ENCODE measurements at regions of chr3 and their contacts with region 1.

Region 1: GRCh38 chr3:184380191-184380626 is 355 bp downstream of the CHRD start:
- DNase-seq: peak; percentile 69 to 80
- ATAC-seq: peak in 6 of 8 donors; percentile 41 to 62 (median 48)
- H3K4me3 ChIP-seq: peak overlapping the region; percentile 11 to 58 (median 54)
- H3K27ac ChIP-seq: peak overlapping the region in 6 of 10 donors; percentile 41 to 79 (median 68)
- H3K4me1 ChIP-seq: peaks cover 7 to 40% (median 21%) of the 10 kb centered on the region in 9 donors
- H3K27me3 ChIP-seq: peaks cover 5 to 78% (median 62%) of the 10 kb centered on the region in 7 donors
- CTCF ChIP-seq: no peak

Region 2: DNA sequence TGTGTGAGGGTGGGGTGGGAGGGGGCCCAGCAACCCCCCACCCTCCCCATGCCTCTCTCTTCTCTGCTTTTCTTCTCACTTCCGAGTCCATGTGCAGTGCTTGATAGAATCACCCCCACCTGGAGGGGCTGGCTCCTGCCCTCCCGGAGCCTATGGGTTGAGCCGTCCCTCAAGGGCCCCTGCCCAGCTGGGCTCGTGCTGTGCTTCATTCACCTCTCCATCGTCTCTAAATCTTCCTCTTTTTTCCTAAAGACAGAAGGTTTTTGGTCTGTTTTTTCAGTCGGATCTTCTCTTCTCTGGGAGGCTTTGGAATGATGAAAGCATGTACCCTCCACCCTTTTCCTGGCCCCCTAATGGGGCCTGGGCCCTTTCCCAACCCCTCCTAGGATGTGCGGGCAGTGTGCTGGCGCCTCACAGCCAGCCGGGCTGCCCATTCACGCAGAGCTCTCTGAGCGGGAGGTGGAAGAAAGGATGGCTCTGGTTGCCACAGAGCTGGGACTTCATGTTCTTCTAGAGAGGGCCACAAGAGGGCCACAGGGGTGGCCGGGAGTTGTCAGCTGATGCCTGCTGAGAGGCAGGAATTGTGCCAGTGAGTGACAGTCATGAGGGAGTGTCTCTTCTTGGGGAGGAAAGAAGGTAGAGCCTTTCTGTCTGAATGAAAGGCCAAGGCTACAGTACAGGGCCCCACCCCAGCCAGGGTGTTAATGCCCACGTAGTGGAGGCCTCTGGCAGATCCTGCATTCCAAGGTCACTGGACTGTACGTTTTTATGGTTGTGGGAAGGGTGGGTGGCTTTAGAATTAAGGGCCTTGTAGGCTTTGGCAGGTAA is 34.7 kb before region 1 on chr3:
- intact Hi-C with region 1: no loop called
- DNase-seq: peak; percentile 46 to 67
- ATAC-seq: peak; percentile 50 to 87 (median 74)
- H3K4me3 ChIP-seq: no peak overlapping the region
- H3K27ac ChIP-seq: peak overlapping the region in 4 of 10 donors; percentile 22 to 46 (median 40)
- H3K4me1 ChIP-seq: peaks cover 0 to 23% (median 8%) of the 10 kb centered on the region in 9 donors
- H3K27me3 ChIP-seq: no peaks in the 10 kb centered on the region
- CTCF ChIP-seq: peak in 7 of 9 donors; percentile 33 to 59 (median 55)

Region 3: GRCh38 chr3:184523825-184524615 is 143.8 kb after region 1 on chr3:
- intact Hi-C with region 1: loop called in 2 of 10 experiments (anchors 5 to 10 kb)
- DNase-seq: no peak
- ATAC-seq: peak in 5 of 8 donors; percentile 58 to 87 (median 76)
- H3K4me3 ChIP-seq: no peak overlapping the region
- H3K27ac ChIP-seq: no peak overlapping the region
- H3K4me1 ChIP-seq: peaks cover 0 to 24% (median 20%) of the 10 kb centered on the region in 9 donors
- H3K27me3 ChIP-seq: peaks cover 0 to 77% (median 48%) of the 10 kb centered on the region in 7 donors
- CTCF ChIP-seq: no peak

Region 4: DNA sequence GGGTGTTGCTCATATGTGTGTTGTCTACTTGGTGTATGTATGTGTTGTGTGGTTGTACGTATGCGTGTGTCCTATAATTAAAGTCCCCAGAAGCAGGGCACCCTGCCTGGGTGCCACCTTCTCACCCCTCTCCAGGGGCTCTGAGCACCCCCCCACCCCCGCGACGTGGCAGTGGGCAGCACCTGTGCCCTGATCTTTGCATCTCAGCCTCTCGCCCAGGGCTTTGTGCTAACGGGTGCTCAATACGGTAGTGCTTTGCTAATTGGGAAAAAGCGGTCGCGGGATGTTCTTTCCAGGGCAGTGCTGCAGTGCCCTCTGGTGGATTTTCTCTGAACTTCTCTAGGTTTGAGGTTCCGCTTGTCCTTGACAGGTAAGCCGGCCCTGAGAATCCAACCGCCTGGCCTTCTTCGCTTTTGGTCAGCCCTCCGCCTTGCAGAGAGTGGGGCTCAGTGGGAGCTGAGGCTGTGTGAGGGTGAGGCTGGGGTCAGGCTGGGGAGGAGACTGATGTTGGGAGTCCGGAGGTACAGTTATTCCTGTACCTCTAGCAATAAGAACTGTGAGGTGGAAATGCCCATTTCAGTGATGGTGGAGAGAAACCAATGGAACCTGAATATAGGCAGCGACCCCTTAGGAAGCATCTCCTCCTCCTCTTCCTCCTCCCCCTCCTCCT is 163.8 kb after region 1 on chr3:
- intact Hi-C with region 1: loop called in 1 of 10 experiments (anchors 5 kb)
- DNase-seq: peak in 1 of 2 donors; percentile 81
- ATAC-seq: peak; percentile 61 to 77 (median 72)
- H3K4me3 ChIP-seq: no peak overlapping the region
- H3K27ac ChIP-seq: no peak overlapping the region
- H3K4me1 ChIP-seq: peaks cover 0 to 12% (median 3%) of the 10 kb centered on the region in 9 donors
- H3K27me3 ChIP-seq: peaks cover 0 to 45% (median 35%) of the 10 kb centered on the region in 7 donors
- CTCF ChIP-seq: peak; percentile 85 to 97 (median 92)

Measured in heart right ventricle (tissue), 16 donors.